Thyroid gland (tissue), 4 donors: ENCODE measurements at regions of chr13 and their contacts with region 1.

Region 1: GRCh38 chr13:91946498-91947070 is 548.2 kb downstream of the GPC5 start:
- DNase-seq: peak in 1 of 2 donors; percentile 10
- H3K4me3 ChIP-seq: no peak overlapping the region
- H3K27ac ChIP-seq: no peak overlapping the region
- H3K4me1 ChIP-seq: no peaks in the 10 kb centered on the region
- H3K27me3 ChIP-seq: no peaks in the 10 kb centered on the region
- CTCF ChIP-seq: peak in 4 of 6 experiments; percentile 54 to 68 (median 65)
- POLR2A ChIP-seq: no peak

Region 2: DNA sequence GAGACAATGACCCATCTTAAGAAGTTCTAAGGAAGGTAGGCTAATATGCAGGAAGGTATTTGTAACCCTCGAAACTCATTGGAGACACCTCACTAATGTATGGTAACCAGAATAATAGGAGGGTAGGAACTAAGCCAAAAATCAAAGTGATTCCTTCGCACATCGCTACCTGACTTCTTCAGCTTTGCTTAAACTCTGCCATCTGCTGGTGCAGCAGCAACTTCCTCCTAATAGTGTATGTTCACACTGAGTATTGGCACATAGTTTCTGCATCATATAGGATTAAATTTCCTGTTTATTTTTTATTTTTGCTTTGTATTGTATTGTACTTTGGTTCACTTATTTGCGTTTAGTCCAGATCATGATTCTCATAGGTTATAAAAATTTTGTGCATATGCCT is 128.1 kb after region 1 on chr13:
- intact Hi-C with region 1: no loop called
- DNase-seq: peak; percentile 8 to 29
- H3K4me3 ChIP-seq: no peak overlapping the region
- H3K27ac ChIP-seq: no peak overlapping the region
- H3K4me1 ChIP-seq: no peaks in the 10 kb centered on the region
- H3K27me3 ChIP-seq: no peaks in the 10 kb centered on the region
- CTCF ChIP-seq: peak in 2 of 6 experiments; percentile 15 to 45
- POLR2A ChIP-seq: no peak

Region 3: GRCh38 chr13:92143766-92144165 is 197.2 kb after region 1 on chr13:
- intact Hi-C with region 1: loop called (anchors 5 kb)
- DNase-seq: peak in 1 of 2 donors; percentile 17
- H3K4me3 ChIP-seq: no peak overlapping the region
- H3K27ac ChIP-seq: no peak overlapping the region
- H3K4me1 ChIP-seq: no peaks in the 10 kb centered on the region
- H3K27me3 ChIP-seq: no peaks in the 10 kb centered on the region
- CTCF ChIP-seq: peak in 4 of 6 experiments; percentile 42 to 75 (median 56)
- POLR2A ChIP-seq: no peak

Region 4: GRCh38 chr13:92265408-92265807 is 318.8 kb after region 1 on chr13:
- intact Hi-C with region 1: no loop called
- DNase-seq: no peak
- H3K4me3 ChIP-seq: no peak overlapping the region
- H3K27ac ChIP-seq: no peak overlapping the region
- H3K4me1 ChIP-seq: no peaks in the 10 kb centered on the region
- H3K27me3 ChIP-seq: no peaks in the 10 kb centered on the region
- CTCF ChIP-seq: no peak
- POLR2A ChIP-seq: no peak